Right cardiac atrium (tissue), 5 donors: ENCODE measurements at regions of chr14 and their contacts with region 1.

Region 1: DNA sequence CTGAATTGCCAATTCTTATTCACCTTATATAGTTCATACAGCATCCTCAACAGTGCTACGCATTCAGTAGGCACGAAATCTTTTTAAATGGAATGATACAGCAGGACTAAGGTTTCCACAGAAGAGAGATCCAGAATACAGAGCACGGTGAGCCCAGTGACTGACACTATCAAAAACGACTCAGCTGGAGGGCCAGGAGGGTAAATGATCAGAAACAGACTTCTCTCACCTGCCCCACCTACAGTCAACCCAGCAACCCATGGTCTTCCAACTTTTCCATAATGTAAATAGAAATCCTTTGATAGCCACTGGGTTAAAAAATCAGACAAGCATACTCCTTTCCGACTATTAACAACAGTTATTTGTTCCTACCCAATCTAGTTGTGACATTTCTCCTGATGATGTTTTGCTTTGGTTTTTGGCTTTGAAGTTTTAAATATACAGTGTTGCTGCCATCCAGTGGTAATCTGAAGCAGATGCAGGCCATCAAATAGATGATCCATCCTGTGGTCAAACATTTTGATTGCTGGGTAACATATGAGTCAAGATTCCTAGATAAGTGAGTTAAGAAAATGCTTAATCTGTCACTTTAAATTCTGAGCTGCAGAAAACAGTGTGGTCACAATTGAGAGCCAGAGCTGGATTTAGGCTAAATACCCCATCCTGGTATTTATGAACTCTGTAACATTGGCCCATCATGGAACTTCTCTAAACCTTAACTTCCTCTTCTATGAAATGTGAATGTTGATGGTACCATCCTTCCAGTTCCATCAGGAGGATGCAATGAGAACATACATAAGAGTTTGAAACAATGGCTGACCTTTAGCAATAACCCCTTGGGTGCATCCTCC is 42.0 kb downstream of the GPHB5 start:
- DNase-seq: no peak
- ATAC-seq: peak in 1 of 2 donors; percentile 36
- H3K4me3 ChIP-seq: no peak overlapping the region
- H3K27ac ChIP-seq: no peak overlapping the region
- H3K4me1 ChIP-seq: peaks cover 7% of the 10 kb centered on the region
- H3K27me3 ChIP-seq: no peaks in the 10 kb centered on the region

Region 2: DNA sequence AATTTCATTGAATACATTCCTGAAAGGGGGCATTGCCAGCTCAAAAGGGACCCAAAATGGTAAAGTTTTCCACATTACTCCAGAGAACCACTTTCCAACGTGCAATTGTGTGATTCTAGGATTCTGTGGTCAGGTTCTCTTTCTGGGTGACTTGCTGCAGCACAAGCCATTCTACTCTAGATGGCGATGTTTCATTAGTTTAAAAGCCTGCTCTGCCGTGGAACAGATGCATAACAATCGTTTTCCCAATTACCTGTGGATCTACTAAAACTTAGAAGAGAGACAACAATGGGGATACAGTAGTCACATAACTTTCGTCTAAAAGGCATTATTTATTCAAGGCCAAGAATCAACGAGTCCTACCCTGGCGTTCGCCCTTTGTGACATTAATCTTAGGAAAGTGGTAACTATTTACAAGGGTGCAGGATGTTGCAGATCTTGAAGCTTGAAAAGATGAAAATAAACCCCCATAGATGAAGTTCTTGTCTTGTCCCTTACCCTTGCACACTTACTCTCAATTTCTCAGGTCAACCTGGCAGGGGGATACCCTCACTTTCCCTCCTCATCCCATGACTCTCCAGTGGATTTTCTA is 1113.6 kb before region 1 on chr14:
- intact Hi-C with region 1: loop called in 2 of 4 experiments (anchors 10 kb)
- DNase-seq: no peak
- ATAC-seq: peak; percentile 59 to 61
- H3K4me3 ChIP-seq: no peak overlapping the region
- H3K27ac ChIP-seq: no peak overlapping the region
- H3K4me1 ChIP-seq: no peaks in the 10 kb centered on the region
- H3K27me3 ChIP-seq: no peaks in the 10 kb centered on the region

Region 3: DNA sequence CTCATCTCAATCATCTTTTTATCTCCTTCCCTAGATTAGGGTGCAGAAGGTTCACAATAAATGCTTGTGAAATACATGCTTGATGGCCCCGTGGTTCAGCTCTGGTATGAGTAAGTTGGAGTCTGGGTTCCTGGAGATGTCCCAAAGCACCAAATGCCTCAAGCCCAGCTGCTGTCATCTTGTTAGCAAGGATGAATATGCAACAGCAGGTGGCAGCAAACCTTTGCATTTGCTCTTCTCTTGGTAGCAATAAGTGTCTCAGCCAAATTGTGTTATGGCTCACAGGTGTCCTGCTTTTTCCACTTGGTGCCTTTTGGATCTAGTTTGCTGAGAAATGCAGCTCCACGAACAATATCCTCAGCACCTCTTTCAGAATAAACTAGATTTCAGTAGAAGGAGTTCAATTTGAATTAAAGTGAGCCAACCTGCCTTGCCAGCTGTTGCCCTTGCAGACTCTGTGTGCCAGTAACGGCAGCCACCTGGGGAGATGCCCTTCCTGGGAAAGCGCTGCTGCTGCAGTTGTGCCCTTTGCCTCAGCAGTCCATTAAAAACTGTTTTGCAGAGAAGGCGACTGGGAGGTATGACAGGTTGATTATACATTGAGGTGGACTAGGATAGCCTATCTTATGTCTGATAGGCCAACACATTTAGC is 1097.2 kb before region 1 on chr14:
- intact Hi-C with region 1: loop called in 1 of 4 experiments (anchors 10 kb)
- DNase-seq: peak in 1 of 3 donors; percentile 28
- ATAC-seq: peak; percentile 54 to 59
- H3K4me3 ChIP-seq: no peak overlapping the region
- H3K27ac ChIP-seq: no peak overlapping the region
- H3K4me1 ChIP-seq: no peaks in the 10 kb centered on the region
- H3K27me3 ChIP-seq: no peaks in the 10 kb centered on the region

Region 4: GRCh38 chr14:63174760-63175211 is 101.9 kb before region 1 on chr14:
- intact Hi-C with region 1: loop called (anchors 2 to 5 kb)
- DNase-seq: no peak
- ATAC-seq: peak; percentile 69 to 88
- H3K4me3 ChIP-seq: no peak overlapping the region
- H3K27ac ChIP-seq: peak overlapping the region; percentile 30
- H3K4me1 ChIP-seq: peaks cover 2% of the 10 kb centered on the region
- H3K27me3 ChIP-seq: no peaks in the 10 kb centered on the region

Region 5: GRCh38 chr14:63203618-63204406 is 72.9 kb before region 1 on chr14:
- intact Hi-C with region 1: no loop called
- DNase-seq: peak; percentile 86 to 90 (median 88)
- ATAC-seq: peak; percentile 98 to 99
- H3K4me3 ChIP-seq: peak overlapping the region; percentile 80
- H3K27ac ChIP-seq: peak overlapping the region; percentile 94
- H3K4me1 ChIP-seq: no peaks in the 10 kb centered on the region
- H3K27me3 ChIP-seq: no peaks in the 10 kb centered on the region

Region 6: GRCh38 chr14:63483315-63483714 is 206.6 kb after region 1 on chr14:
- intact Hi-C with region 1: no loop called
- DNase-seq: no peak
- ATAC-seq: peak; percentile 51 to 63
- H3K4me3 ChIP-seq: no peak overlapping the region
- H3K27ac ChIP-seq: no peak overlapping the region
- H3K4me1 ChIP-seq: peaks cover 7% of the 10 kb centered on the region
- H3K27me3 ChIP-seq: no peaks in the 10 kb centered on the region